T-cell (primary cell): ENCODE measurements at regions of chr11 and their contacts with region 1.

Region 1: GRCh38 chr11:113289431-113290187 is 24.8 kb upstream of the TTC12 start:
- DNase-seq: peak in 34 of 35 experiments; percentile 21 to 74 (median 49)
- ATAC-seq: peak; percentile 77 to 93 (median 85)
- H3K4me3 ChIP-seq: no peak overlapping the region
- H3K4me3 Mint-ChIP-seq: no peak overlapping the region
- H3K27ac ChIP-seq: no peak overlapping the region
- H3K27ac Mint-ChIP-seq: no peak overlapping the region
- H3K4me1 ChIP-seq: peaks cover 0 to 3% of the 10 kb centered on the region in 2 experiments
- H3K4me1 Mint-ChIP-seq: no peaks in the 10 kb centered on the region
- H3K27me3 ChIP-seq: peaks cover 0 to 3% of the 10 kb centered on the region in 2 experiments
- H3K27me3 Mint-ChIP-seq: peaks cover 13 to 20% of the 10 kb centered on the region in 2 donors

Region 2: DNA sequence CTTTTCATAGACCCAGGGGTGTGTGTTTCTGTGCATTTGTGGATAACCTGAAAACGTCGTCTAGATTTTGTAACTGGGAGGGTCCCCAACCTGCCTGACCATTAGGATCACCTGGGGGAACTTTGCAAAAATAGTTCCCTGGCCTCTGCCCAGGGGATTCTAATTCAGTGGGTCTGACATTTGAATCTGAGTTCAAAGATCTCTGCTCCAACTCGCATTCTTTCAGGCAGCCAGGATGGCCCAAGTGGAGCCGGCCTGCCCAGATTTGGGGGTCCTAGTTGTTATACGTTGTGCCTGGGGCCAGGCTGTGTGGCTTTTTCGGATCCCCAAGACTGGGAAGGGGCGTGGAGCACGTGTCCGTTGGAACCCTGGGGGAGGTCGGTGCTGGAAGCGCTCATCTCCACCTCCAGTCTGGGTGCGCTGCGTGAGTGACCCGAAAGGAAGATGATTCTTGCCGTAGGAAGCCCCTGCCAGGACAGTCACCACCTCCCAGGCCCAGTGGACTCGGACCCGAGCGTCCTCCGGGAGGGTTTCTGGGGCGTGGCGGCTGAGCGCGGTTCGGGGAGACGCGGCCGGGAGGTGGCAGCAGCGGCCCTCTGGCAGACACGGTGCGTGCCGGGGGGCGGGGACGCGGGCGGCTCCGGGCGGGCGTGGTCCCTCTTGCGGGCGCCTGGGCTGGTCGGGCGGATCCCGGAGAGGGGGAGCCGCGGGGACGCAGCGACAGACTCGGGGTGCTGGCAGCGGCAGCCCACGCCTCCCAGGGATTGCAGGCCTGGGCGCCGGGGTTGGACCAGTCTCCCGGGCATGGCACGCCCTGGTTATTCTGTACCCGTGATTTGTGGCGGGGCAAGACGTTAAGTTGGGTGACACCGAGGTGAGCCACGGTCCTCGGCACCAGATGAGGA is 999.8 kb before region 1 on chr11:
- CTCF ChIA-PET with region 1: interaction called, 4 to 12 read pairs
- POLR2A ChIA-PET with region 1: no interaction called
- DNase-seq: peak; percentile 68 to 90 (median 79)
- ATAC-seq: peak; percentile 98 to 99 (median 99)
- H3K4me3 ChIP-seq: peak overlapping the region; percentile 53 to 72
- H3K4me3 Mint-ChIP-seq: peak overlapping the region; percentile 70 to 77 (median 75)
- H3K27ac ChIP-seq: peak overlapping the region; percentile 30
- H3K27ac Mint-ChIP-seq: peak overlapping the region; percentile 36 to 75
- H3K4me1 ChIP-seq: peaks cover 8 to 12% of the 10 kb centered on the region in 2 experiments
- H3K4me1 Mint-ChIP-seq: peaks cover 19 to 25% (median 20%) of the 10 kb centered on the region in 3 donors
- H3K27me3 ChIP-seq: peaks cover 0 to 6% of the 10 kb centered on the region in 2 experiments
- H3K27me3 Mint-ChIP-seq: peaks cover 0 to 3% of the 10 kb centered on the region in 2 donors

Region 3: DNA sequence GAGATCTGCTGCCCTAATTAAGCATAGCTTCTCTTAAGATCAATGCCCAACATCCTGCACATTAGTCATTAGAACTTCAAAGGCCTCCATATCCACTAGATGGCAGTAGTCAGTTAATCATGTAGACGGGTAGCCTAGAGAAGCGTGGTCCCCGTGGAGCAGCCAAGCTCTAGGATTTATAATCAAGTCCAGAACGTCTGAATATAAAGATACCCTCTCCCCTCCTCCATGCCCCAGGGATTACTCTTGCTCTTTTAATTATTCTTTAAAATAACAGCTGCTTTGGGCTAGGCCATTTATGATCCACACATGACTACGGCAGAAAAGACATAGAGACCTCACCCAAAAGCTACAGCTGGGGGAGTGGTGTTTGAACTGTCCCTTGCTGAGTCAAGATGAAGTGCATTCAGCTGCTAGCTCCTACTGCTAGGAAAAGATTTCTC is 701.3 kb before region 1 on chr11:
- CTCF ChIA-PET with region 1: interaction called, 5 to 21 read pairs
- POLR2A ChIA-PET with region 1: no interaction called
- DNase-seq: peak in 25 of 35 experiments; percentile 4 to 69 (median 16)
- ATAC-seq: peak; percentile 56 to 83 (median 78)
- H3K4me3 ChIP-seq: no peak overlapping the region
- H3K4me3 Mint-ChIP-seq: no peak overlapping the region
- H3K27ac ChIP-seq: no peak overlapping the region
- H3K27ac Mint-ChIP-seq: no peak overlapping the region
- H3K4me1 ChIP-seq: peaks cover 0 to 3% of the 10 kb centered on the region in 2 experiments
- H3K4me1 Mint-ChIP-seq: peaks cover 0 to 4% (median 2%) of the 10 kb centered on the region in 3 donors
- H3K27me3 ChIP-seq: no peaks in the 10 kb centered on the region
- H3K27me3 Mint-ChIP-seq: no peaks in the 10 kb centered on the region

Region 4: GRCh38 chr11:113387605-113388211 is 98.1 kb after region 1 on chr11 and contains the start of gene ANKK1:
- CTCF ChIA-PET with region 1: no interaction called
- POLR2A ChIA-PET with region 1: no interaction called
- DNase-seq: no peak
- ATAC-seq: no peak
- H3K4me3 ChIP-seq: no peak within 1 kb of the TSS
- H3K4me3 Mint-ChIP-seq: no peak within 1 kb of the TSS
- H3K27ac ChIP-seq: no peak within 1 kb of the TSS
- H3K27ac Mint-ChIP-seq: no peak within 1 kb of the TSS
- H3K4me1 ChIP-seq: peaks cover 0 to 9% of the 10 kb centered on the region in 2 experiments
- H3K4me1 Mint-ChIP-seq: no peaks in the 10 kb centered on the region
- H3K27me3 ChIP-seq: peaks cover 4 to 32% of the 10 kb centered on the region in 2 experiments
- H3K27me3 Mint-ChIP-seq: peaks cover 3 to 5% of the 10 kb centered on the region in 2 donors
- total RNA-seq, gene ANKK1: 1.2 to 4.6 (median 3.3) TPM

Region 5: DNA sequence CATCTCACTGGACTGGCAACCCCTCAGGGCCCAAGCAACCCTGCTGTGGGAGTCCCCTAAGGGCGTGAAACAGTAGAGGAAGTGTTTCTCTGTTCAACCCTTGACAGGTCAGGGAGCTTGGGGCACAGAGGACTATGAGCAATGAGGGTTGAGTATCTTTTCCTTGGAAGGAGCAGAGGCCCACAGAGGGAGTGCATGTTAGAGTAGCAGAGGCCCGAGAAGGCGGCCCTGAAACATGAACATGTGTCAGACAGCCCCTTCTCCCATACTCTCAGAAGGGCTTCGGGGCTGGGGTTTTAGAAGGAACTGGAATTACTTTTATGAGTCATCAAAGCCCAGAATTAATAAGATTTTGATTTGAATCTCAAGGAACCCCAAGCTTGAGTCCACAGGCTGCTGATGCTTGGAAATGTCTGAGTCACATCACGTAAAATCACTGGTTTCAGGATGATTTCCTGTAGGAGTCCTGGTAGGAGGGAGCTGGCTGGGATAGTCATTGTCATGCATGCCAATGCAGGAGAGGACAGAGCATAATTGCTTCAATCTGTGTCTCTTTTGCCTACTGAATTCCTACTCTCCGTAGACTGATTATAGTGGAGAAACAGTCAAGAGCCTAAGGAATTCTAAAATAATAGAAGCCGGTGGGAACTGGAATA is 1088.1 kb after region 1 on chr11:
- CTCF ChIA-PET with region 1: no interaction called
- POLR2A ChIA-PET with region 1: no interaction called
- DNase-seq: no peak
- ATAC-seq: no peak
- H3K4me3 ChIP-seq: no peak overlapping the region
- H3K4me3 Mint-ChIP-seq: no peak overlapping the region
- H3K27ac ChIP-seq: no peak overlapping the region
- H3K27ac Mint-ChIP-seq: no peak overlapping the region
- H3K4me1 ChIP-seq: peaks cover 0 to 5% of the 10 kb centered on the region in 2 experiments
- H3K4me1 Mint-ChIP-seq: peaks cover 6 to 12% (median 11%) of the 10 kb centered on the region in 3 donors
- H3K27me3 ChIP-seq: peaks cover 2 to 3% of the 10 kb centered on the region in 2 experiments
- H3K27me3 Mint-ChIP-seq: peaks cover 8 to 15% of the 10 kb centered on the region in 2 donors